ENCODE measurements at regions of chr10 and their contacts with region 1.

Region 1: GRCh38 chr10:114403541-114404161 is 651 bp downstream of the AFAP1L2 start:
- DNase-seq: peak in 1 of 2 donors; percentile 32
- ATAC-seq: peak; percentile 24

Region 2: GRCh38 chr10:114173921-114174694 is 229.5 kb before region 1 on chr10 and contains the start of gene CCDC186:
- intact Hi-C with region 1: loop called in 1 of 2 experiments (anchors 5 kb)
- DNase-seq: peak; percentile 98
- ATAC-seq: peak; percentile 93
- total RNA-seq, gene CCDC186: 42.3 to 43.3 TPM